AG04450 (cell line): ENCODE measurements at regions of chr10 and their contacts with region 1.

Region 1: GRCh38 chr10:34994565-34995142 is 95.5 kb downstream of the CUL2 start:
- DNase-seq: peak; percentile 37
- H3K4me3 ChIP-seq: no peak overlapping the region
- H3K27ac ChIP-seq: no peak overlapping the region
- H3K27me3 ChIP-seq: no peaks in the 10 kb centered on the region
- CTCF ChIP-seq: peak; percentile 77

Region 2: DNA sequence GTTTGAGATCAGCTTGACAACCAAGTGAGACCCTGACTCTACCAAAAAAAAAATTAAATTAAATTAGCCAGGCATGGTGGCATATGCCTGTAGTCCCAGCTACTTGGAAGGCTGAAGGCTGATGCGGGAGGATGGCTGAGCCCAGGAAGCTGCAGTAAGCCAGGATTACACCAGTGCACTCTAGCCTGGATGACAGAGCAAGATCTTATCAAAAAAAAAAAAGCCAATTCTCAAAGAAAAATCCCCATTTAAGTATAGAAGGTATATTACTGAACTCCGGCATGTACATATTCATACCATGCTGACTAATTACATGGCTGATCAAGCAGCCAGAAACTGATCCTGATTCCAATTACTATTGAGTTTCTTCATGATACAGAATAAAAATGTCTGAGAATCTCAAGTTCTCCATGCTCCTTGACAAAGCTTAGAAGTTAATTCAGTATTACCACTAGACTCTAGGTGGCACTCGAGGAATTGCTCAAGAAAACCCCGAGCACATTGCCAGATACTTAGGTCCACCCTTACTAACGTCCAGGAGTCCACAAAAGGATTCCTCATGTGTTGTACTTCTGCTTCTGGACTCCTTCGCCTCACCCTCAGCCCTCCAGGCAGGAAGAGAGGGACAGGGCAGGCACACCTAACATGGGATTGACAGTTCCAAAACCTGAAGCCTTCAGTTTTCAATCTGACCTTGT is 328.5 kb before region 1 on chr10:
- CTCF ChIA-PET with region 1: interaction called, 19 read pairs
- POLR2A ChIA-PET with region 1: no interaction called
- DNase-seq: peak; percentile 81
- H3K4me3 ChIP-seq: no peak overlapping the region
- H3K27ac ChIP-seq: no peak overlapping the region
- H3K27me3 ChIP-seq: no peaks in the 10 kb centered on the region
- CTCF ChIP-seq: peak; percentile 73

Region 3: DNA sequence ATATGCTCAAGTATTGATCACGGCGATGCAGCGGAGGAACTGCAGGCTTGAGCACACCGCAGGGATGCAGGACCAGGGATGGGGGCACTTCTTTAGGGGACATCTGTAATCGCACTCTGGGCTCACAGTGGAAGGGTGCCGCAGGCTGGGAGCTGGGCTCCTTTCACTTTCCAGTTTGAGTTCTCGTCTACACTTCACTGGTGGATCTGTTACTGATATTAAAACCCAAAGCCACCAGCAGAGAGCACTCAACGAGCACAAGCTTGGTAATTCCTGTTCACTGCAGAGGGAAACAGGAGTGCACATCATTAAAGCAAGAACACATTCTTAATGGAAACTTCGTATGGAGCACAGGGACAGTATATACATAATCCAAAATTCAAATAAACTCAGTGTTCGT is 270.9 kb before region 1 on chr10:
- CTCF ChIA-PET with region 1: interaction called, 14 read pairs
- POLR2A ChIA-PET with region 1: no interaction called
- DNase-seq: no peak
- H3K4me3 ChIP-seq: no peak overlapping the region
- H3K27ac ChIP-seq: no peak overlapping the region
- H3K27me3 ChIP-seq: no peaks in the 10 kb centered on the region
- CTCF ChIP-seq: peak; percentile 61

Region 4: GRCh38 chr10:34732926-34733325 is 261.7 kb before region 1 on chr10:
- CTCF ChIA-PET with region 1: interaction called, 3 read pairs
- POLR2A ChIA-PET with region 1: interaction called, 12 read pairs
- DNase-seq: no peak
- H3K4me3 ChIP-seq: no peak overlapping the region
- H3K27ac ChIP-seq: no peak overlapping the region
- H3K27me3 ChIP-seq: no peaks in the 10 kb centered on the region
- CTCF ChIP-seq: peak; percentile 32

Region 5: GRCh38 chr10:34768261-34768971 is 226.2 kb before region 1 on chr10:
- CTCF ChIA-PET with region 1: no interaction called
- POLR2A ChIA-PET with region 1: no interaction called
- DNase-seq: no peak
- H3K4me3 ChIP-seq: no peak overlapping the region
- H3K27ac ChIP-seq: no peak overlapping the region
- H3K27me3 ChIP-seq: no peaks in the 10 kb centered on the region
- CTCF ChIP-seq: no peak

Region 6: DNA sequence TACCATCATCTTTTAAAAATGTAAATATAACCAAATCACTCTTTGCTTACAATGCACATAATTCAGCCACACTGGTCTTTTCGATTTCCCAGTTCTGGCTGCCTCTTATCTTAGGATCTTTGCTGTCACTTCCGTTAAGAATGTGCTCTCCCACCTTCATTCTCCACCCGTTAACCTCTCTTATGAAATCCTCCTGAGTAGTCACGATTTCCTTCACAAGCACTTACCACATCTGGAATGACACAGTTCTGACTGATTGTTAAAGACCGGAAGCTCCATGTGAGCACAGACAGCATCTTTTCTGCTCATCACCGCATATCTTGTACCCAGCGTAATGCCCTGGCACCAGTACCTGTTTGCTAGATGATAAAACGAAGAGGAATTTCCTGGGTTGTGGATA is 11.2 kb after region 1 on chr10:
- CTCF ChIA-PET with region 1: interaction called, 11 read pairs
- POLR2A ChIA-PET with region 1: no interaction called
- DNase-seq: peak; percentile 81
- H3K4me3 ChIP-seq: no peak overlapping the region
- H3K27ac ChIP-seq: peak overlapping the region; percentile 72
- H3K27me3 ChIP-seq: no peaks in the 10 kb centered on the region
- CTCF ChIP-seq: no peak